ENCODE measurements at regions of chr6 and their contacts with region 1.

Region 1: DNA sequence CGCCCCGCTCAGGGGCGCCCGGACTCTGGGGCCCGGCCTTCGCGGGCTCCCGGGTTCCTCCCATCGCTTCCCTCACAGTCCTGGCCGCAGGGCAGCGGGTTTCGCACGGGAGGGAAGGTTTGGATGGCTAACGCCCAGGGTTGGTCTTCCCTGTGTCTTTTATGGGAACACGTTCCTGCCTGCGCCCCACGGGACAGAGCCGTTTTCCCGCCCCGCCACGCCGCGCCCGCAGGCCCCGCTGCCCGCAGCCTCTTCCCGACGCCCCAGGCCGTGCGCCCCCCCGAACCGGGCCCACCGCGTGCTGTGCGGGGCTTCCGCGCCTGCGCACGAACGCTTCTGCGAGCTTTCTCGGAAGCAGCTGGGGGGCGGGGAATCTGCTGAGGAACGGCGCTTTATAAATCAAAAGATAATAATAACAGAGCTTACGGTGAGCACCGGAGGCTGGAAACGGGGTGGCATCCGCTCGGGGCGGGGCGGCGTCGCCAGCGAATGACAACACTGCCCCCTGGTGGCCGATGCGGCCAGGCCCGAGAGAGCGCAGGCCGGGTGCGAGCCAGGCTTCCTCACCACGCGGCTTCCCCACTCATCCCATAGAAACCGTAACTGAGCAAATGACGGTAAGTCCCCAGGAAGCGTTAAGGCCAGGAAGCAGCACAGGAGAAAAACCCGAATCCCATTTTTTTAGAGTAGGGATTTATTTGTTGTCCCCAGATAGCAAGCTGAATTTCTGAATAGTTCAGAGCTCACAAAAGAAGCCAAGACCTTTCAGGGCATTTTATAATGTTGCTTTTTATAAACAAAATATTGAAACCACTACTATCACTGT is 116.4 kb downstream of the MYLK4 start:
- DNase-seq: peak; percentile 59
- H3K4me3 ChIP-seq: peak overlapping the region; percentile 37
- H3K27ac ChIP-seq: no peak overlapping the region
- H3K27me3 ChIP-seq: no peaks in the 10 kb centered on the region
- CTCF ChIP-seq: peak; percentile 98

Region 2: DNA sequence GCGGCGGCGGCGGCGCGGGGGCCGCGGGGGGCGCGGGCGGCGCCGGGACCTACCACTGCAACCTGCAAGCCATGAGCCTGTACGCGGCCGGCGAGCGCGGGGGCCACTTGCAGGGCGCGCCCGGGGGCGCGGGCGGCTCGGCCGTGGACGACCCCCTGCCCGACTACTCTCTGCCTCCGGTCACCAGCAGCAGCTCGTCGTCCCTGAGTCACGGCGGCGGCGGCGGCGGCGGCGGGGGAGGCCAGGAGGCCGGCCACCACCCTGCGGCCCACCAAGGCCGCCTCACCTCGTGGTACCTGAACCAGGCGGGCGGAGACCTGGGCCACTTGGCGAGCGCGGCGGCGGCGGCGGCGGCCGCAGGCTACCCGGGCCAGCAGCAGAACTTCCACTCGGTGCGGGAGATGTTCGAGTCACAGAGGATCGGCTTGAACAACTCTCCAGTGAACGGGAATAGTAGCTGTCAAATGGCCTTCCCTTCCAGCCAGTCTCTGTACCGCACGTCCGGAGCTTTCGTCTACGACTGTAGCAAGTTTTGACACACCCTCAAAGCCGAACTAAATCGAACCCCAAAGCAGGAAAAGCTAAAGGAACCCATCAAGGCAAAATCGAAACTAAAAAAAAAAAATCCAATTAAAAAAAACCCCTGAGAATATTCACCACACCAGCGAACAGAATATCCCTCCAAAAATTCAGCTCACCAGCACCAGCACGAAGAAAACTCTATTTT is 1022.6 kb before region 1 on chr6:
- CTCF ChIA-PET with region 1: interaction called, 11 read pairs
- POLR2A ChIA-PET with region 1: no interaction called
- DNase-seq: no peak
- H3K4me3 ChIP-seq: peak overlapping the region; percentile 75
- H3K27ac ChIP-seq: peak overlapping the region; percentile 52
- H3K27me3 ChIP-seq: peaks cover 28% of the 10 kb centered on the region
- CTCF ChIP-seq: no peak

Region 3: DNA sequence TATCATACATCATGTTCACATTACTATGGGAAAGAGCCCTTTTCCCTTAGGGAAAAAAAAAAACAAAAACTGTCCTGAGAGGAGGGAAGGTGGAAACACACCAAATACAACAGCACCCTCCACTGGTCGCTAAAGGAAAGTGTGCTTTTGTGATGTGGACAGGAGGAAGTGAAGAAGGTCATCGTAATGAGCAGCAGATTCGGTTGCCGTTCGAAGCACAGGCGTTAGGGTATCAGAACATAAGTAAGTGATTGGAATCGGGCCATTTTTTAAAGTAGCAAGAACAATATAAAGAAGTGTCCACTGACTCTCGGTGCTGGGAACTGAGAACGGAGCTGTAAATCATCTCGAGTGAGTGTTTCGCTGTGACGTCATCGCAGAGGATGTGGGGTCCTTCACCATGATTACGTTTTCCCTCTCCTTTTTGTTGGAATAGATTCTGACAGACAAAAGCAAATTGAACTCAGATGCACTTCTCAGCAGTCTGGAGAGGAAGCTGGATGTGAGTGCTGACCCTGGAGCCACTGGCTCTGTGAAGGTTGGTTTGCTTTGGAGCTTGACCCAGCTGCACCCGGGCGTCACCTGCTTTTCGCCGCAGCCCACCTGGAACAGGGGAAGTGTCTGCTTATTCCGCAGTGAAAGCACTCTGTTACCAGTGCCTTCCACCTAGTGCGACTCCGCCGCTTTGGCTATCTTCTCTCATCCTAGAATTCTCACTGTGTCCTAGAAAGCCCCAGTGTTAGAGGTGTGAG is 185.4 kb before region 1 on chr6:
- CTCF ChIA-PET with region 1: interaction called, 11 read pairs
- POLR2A ChIA-PET with region 1: no interaction called
- DNase-seq: peak; percentile 63
- H3K4me3 ChIP-seq: peak overlapping the region; percentile 41
- H3K27ac ChIP-seq: no peak overlapping the region
- H3K27me3 ChIP-seq: peaks cover 11% of the 10 kb centered on the region
- CTCF ChIP-seq: peak; percentile 83

Region 4: DNA sequence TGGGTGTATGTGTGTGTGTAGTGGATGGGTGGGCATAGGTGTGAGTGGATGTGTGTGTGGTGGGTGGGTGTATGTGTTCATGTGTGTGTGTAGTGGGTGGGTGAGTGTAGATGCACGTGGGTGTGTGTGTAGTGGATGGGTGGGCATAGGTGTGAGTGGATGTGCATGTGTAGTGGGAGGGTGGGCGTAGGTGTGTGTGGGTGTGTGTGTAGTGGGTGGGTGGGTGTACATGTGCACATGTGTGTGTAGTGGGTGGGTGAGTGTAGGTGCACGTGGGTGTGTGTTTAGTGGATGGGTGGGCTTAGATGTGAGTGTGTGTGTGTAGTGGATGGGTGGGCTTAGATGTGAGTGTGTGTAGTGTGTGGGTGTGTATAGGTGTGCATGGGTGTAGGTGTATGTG is 12.0 kb after region 1 on chr6:
- CTCF ChIA-PET with region 1: interaction called, 53 read pairs
- POLR2A ChIA-PET with region 1: no interaction called
- DNase-seq: no peak
- H3K4me3 ChIP-seq: no peak overlapping the region
- H3K27ac ChIP-seq: no peak overlapping the region
- H3K27me3 ChIP-seq: peaks cover 21% of the 10 kb centered on the region
- CTCF ChIP-seq: no peak

Region 5: DNA sequence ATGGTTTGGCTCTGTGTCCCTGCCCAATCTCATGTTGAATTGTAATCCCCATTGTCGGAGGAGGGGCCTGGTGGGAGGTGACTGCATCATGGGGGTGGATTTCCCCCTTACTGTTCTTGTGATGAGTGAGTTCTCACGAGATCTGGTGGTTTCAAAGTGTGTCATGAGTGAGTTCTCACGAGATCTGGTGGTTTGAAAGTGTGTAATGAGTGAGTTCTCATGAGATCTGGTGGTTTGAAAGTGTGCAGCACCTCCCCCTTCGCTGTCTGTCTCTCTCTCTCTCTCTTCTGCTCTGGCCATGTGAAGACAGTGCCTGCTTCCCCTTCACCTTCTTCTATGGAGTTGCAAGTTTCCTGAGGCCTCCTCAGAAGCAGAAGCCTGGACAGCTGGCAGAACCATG is 28.8 kb after region 1 on chr6:
- CTCF ChIA-PET with region 1: interaction called, 10 read pairs
- POLR2A ChIA-PET with region 1: no interaction called
- DNase-seq: no peak
- H3K4me3 ChIP-seq: no peak overlapping the region
- H3K27ac ChIP-seq: no peak overlapping the region
- H3K27me3 ChIP-seq: no peaks in the 10 kb centered on the region
- CTCF ChIP-seq: no peak

Region 6: GRCh38 chr6:2760882-2761842 is 126.8 kb after region 1 on chr6:
- CTCF ChIA-PET with region 1: no interaction called
- POLR2A ChIA-PET with region 1: no interaction called
- DNase-seq: no peak
- H3K4me3 ChIP-seq: no peak overlapping the region
- H3K27ac ChIP-seq: no peak overlapping the region
- H3K27me3 ChIP-seq: no peaks in the 10 kb centered on the region
- CTCF ChIP-seq: peak; percentile 20; the same call in 1 of the 2 replicates

Region 7: GRCh38 chr6:2791124-2791974 is 157.0 kb after region 1 on chr6:
- CTCF ChIA-PET with region 1: no interaction called
- POLR2A ChIA-PET with region 1: no interaction called
- DNase-seq: peak; percentile 84
- H3K4me3 ChIP-seq: peak overlapping the region; percentile 21
- H3K27ac ChIP-seq: peak overlapping the region; percentile 98
- H3K27me3 ChIP-seq: no peaks in the 10 kb centered on the region
- CTCF ChIP-seq: peak; percentile 88

Region 8: GRCh38 chr6:4441981-4442440 is 1807.7 kb after region 1 on chr6:
- CTCF ChIA-PET with region 1: no interaction called
- POLR2A ChIA-PET with region 1: no interaction called
- DNase-seq: peak; percentile 3
- H3K4me3 ChIP-seq: no peak overlapping the region
- H3K27ac ChIP-seq: no peak overlapping the region
- H3K27me3 ChIP-seq: no peaks in the 10 kb centered on the region
- CTCF ChIP-seq: no peak

Measured in AG04450 (cell line).